Gastrocnemius medialis (tissue), 4 donors: ENCODE measurements at regions of chr15 and their contacts with region 1.

Region 1: GRCh38 chr15:69064649-69065048 is 50.2 kb downstream of the NOX5 start:
- DNase-seq: no peak
- ATAC-seq: no peak
- H3K4me3 ChIP-seq: no peak overlapping the region
- H3K27ac ChIP-seq: no peak overlapping the region
- H3K4me1 ChIP-seq: peaks cover 5 to 6% of the 10 kb centered on the region in 2 donors
- H3K27me3 ChIP-seq: no peaks in the 10 kb centered on the region
- CTCF ChIP-seq: no peak
- POLR2A ChIP-seq: no peak

Region 2: GRCh38 chr15:69045808-69046207 is 18.8 kb before region 1 on chr15:
- in situ Hi-C with region 1: no loop called
- intact Hi-C with region 1: no loop called
- DNase-seq: no peak
- ATAC-seq: no peak
- H3K4me3 ChIP-seq: no peak overlapping the region
- H3K27ac ChIP-seq: no peak overlapping the region
- H3K4me1 ChIP-seq: no peaks in the 10 kb centered on the region
- H3K27me3 ChIP-seq: no peaks in the 10 kb centered on the region
- CTCF ChIP-seq: no peak
- POLR2A ChIP-seq: no peak

Region 3: DNA sequence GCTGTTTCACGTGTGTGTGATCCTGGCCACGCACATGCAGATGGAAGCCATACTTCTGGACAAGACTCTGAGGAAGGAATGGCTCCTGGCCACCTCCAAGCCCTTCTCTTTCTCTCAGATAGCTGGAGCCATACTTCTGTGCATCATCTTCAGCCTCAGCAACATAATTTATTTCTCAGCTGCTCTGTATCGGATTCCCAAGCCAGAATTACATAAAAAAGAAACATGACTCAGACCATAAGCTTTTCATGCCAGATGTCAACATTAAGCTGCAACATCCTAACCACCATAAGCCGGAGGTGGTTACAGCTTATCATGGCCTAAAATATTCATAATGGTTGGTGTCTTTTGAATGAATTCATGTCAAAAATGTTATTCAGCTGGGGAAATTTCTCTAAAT is 338.9 kb after region 1 on chr15:
- in situ Hi-C with region 1: loop called (anchors 5 to 10 kb)
- intact Hi-C with region 1: no loop called
- DNase-seq: no peak
- ATAC-seq: peak; percentile 72 to 73
- H3K4me3 ChIP-seq: no peak overlapping the region
- H3K27ac ChIP-seq: no peak overlapping the region
- H3K4me1 ChIP-seq: no peaks in the 10 kb centered on the region
- H3K27me3 ChIP-seq: no peaks in the 10 kb centered on the region
- CTCF ChIP-seq: no peak
- POLR2A ChIP-seq: no peak